Calu3 (cell line): ENCODE measurements at regions of chr7 and their contacts with region 1.

Region 1: GRCh38 chr7:94449148-94449725 is 54.5 kb downstream of the COL1A2 start:
- DNase-seq: no peak
- H3K4me3 Mint-ChIP-seq: no peak overlapping the region
- H3K27ac Mint-ChIP-seq: no peak overlapping the region
- H3K4me1 Mint-ChIP-seq: peaks cover 9% of the 10 kb centered on the region
- H3K27me3 Mint-ChIP-seq: no peaks in the 10 kb centered on the region
- CTCF ChIP-seq: no peak

Region 2: GRCh38 chr7:94657771-94658693 is 208.8 kb after region 1 on chr7:
- CTCF ChIA-PET with region 1: no interaction called
- intact Hi-C with region 1: loop called (anchors 5 kb)
- DNase-seq: peak; percentile 92
- H3K4me3 Mint-ChIP-seq: peak overlapping the region; percentile 91
- H3K27ac Mint-ChIP-seq: peak overlapping the region; percentile 73
- H3K4me1 Mint-ChIP-seq: peaks cover 8% of the 10 kb centered on the region
- H3K27me3 Mint-ChIP-seq: no peaks in the 10 kb centered on the region
- CTCF ChIP-seq: no peak

Region 3: GRCh38 chr7:94907026-94907810 is 458.0 kb after region 1 on chr7 and contains the start of gene PPP1R9A:
- CTCF ChIA-PET with region 1: no interaction called
- intact Hi-C with region 1: loop called (anchors 10 kb)
- DNase-seq: peak; percentile 68
- H3K4me3 Mint-ChIP-seq: peak within 1 kb of the TSS; percentile 89
- H3K27ac Mint-ChIP-seq: peak within 1 kb of the TSS; percentile 71
- H3K4me1 Mint-ChIP-seq: peaks cover 23% of the 10 kb centered on the region
- H3K27me3 Mint-ChIP-seq: no peaks in the 10 kb centered on the region
- CTCF ChIP-seq: no peak
- total RNA-seq, gene PPP1R9A: 17.9 and 19.4 TPM in 2 replicates

Region 4: GRCh38 chr7:95045236-95045923 is 596.1 kb after region 1 on chr7:
- CTCF ChIA-PET with region 1: no interaction called
- intact Hi-C with region 1: loop called (anchors 1 kb)
- DNase-seq: peak; percentile 51
- H3K4me3 Mint-ChIP-seq: no peak overlapping the region
- H3K27ac Mint-ChIP-seq: no peak overlapping the region
- H3K4me1 Mint-ChIP-seq: no peaks in the 10 kb centered on the region
- H3K27me3 Mint-ChIP-seq: no peaks in the 10 kb centered on the region
- CTCF ChIP-seq: peak; percentile 31

Region 5: DNA sequence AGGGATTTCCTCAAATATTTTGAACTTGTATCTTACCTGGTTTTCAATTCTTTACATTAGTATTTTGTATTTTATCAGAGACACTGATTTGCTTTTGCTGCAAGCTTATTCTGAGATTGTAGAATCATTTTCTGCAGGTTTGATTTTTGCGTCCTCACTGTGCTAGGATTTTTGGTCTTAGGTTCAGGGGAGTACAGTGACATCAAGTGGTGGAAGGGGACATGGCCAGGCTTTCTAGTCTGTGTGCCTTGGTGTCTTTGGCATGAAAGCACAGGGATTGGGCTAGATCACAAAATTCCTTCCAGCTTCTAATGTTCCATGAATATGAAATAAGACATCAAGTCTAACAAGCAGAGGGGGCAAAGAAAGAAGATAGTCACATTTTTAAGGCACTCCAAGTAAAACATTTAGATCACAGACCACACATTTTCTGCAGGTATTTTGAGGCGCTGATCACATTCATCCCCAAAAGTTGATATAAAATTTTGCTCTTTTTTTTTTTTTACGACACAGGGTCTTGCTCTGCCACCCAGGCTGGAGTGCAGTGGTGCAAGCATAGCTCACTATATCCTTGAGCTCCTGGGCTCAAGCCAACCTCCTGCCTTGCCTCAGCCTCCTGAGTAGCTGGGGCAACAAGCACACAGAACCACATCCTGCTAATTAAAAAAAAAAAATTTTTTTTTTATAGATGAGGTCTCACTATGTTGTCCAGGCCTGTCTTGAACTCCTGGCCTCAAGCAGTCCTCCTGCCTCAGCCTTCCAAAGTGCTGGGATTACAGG is 750.7 kb after region 1 on chr7:
- CTCF ChIA-PET with region 1: no interaction called
- intact Hi-C with region 1: loop called (anchors 5 kb)
- DNase-seq: peak; percentile 16
- H3K4me3 Mint-ChIP-seq: no peak overlapping the region
- H3K27ac Mint-ChIP-seq: no peak overlapping the region
- H3K4me1 Mint-ChIP-seq: peaks cover 2% of the 10 kb centered on the region
- H3K27me3 Mint-ChIP-seq: no peaks in the 10 kb centered on the region
- CTCF ChIP-seq: peak; percentile 28

Region 6: DNA sequence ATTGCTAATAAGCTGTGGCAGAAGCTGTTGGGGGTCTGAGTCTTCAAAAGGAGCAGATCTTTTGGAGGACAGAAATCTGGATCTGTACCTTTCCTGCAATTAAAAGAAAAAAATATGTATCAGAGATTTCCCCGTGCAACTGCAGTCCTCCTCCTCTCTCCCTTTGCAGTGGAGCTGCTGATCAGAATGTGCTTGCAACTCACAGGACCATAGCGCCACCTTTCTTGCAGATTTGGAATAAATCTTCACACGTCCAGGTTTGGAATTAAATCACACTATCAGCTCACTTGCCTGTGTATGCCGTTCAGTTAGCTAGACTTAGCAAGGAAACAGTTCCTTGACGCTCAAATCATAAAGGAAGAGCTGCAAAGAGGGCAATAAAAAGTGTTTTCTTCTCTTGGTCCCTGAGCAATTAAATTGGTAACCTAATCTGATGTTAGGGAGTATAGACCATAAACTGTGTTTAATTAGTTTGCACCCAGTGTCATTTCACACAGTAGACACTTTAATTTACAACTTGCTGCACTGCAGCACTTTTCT is 797.7 kb after region 1 on chr7:
- CTCF ChIA-PET with region 1: interaction called, 3 read pairs
- intact Hi-C with region 1: loop called (anchors 10 kb)
- DNase-seq: peak; percentile 43
- H3K4me3 Mint-ChIP-seq: no peak overlapping the region
- H3K27ac Mint-ChIP-seq: no peak overlapping the region
- H3K4me1 Mint-ChIP-seq: no peaks in the 10 kb centered on the region
- H3K27me3 Mint-ChIP-seq: no peaks in the 10 kb centered on the region
- CTCF ChIP-seq: peak; percentile 62